Body of pancreas (tissue), 4 donors: ENCODE measurements at regions of chr6 and their contacts with region 1.

Region 1: GRCh38 chr6:45714741-45715507 is 300.7 kb downstream of the CLIC5 start:
- DNase-seq: peak; percentile 47 to 72 (median 48)
- ATAC-seq: peak; percentile 79
- H3K4me3 ChIP-seq: no peak overlapping the region
- H3K27ac ChIP-seq: no peak overlapping the region
- H3K4me1 ChIP-seq: no peaks in the 10 kb centered on the region
- H3K27me3 ChIP-seq: no peaks in the 10 kb centered on the region
- CTCF ChIP-seq: peak; percentile 61 to 87 (median 82)
- POLR2A ChIP-seq: no peak

Region 2: DNA sequence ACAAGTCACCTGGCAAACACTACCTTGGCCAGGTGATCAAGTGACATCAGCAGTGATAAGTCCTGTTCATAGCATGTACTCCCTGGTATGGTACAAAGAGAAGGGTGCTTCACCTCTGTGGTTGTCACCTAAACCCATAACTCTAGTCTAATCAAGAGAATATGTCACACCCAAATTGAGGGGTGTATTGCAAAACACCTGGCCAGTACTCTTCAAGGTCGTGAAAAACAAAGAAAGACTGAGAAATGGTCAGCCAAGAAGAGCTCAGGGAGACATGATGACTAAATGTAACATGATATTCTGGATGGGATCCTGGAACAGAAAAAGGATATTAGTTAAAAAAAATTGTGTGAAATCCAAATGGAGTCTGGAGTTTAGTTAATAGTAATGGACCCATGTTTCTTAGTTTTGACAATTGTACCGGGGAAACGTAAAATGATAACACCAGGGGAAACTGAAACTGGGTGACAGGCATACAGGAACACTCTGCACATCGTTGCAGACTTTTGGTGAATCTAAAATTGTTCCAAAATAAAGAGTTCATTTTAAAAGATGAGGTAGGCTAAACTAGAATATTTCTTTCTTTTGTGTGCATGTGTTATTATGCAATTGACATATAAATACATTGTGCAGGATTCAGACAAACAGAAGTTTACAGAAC is 1065.4 kb before region 1 on chr6:
- intact Hi-C with region 1: loop called (anchors 5 kb)
- DNase-seq: no peak
- ATAC-seq: peak; percentile 45
- H3K4me3 ChIP-seq: no peak overlapping the region
- H3K27ac ChIP-seq: no peak overlapping the region
- H3K4me1 ChIP-seq: no peaks in the 10 kb centered on the region
- H3K27me3 ChIP-seq: no peaks in the 10 kb centered on the region
- CTCF ChIP-seq: no peak
- POLR2A ChIP-seq: no peak

Region 3: GRCh38 chr6:45655630-45656422 is 59.1 kb before region 1 on chr6:
- intact Hi-C with region 1: no loop called
- DNase-seq: no peak
- ATAC-seq: no peak
- H3K4me3 ChIP-seq: no peak overlapping the region
- H3K27ac ChIP-seq: no peak overlapping the region
- H3K4me1 ChIP-seq: no peaks in the 10 kb centered on the region
- H3K27me3 ChIP-seq: no peaks in the 10 kb centered on the region
- CTCF ChIP-seq: no peak
- POLR2A ChIP-seq: no peak